ENCODE measurements at regions of chr17 and their contacts with region 1.

Region 1: DNA sequence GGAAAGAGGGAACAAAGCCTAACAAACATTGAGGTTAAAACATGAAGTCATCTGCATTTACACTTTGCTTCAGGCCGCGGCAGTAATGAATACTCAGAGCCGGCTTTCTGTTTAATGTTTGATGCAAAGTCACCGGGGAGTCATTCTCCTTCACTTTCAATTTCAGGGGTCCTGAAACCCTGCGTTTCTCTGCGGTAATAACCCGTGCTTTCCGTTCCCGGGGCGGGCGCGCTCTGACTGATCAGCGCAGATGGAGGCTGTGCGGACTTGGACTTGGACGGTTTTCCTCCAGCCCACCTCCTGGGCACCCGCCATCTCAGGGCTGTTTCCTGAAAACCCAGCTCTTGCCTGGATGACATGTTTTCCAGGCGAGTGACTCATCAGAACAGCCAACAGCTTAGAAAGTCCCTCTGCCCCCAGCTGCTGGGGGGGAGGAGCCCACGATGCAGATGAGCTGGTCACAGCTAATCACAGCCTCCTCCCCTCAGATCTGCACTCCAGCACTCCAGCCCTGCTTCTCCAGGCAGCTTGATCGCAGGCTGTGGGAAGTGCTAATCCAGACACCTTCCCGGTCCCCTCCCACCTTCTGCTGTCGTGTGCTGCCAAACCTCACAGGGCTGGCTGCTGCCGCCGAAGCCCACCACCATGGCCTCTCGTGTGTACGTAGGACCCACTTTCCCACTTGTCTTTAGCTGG is 158.6 kb upstream of the CHMP6 start:
- DNase-seq: peak; percentile 88
- ATAC-seq: peak; percentile 89
- H3K4me3 Mint-ChIP-seq: peak overlapping the region; percentile 83
- H3K27ac Mint-ChIP-seq: peak overlapping the region; percentile 96
- H3K4me1 Mint-ChIP-seq: peaks cover 63% of the 10 kb centered on the region
- H3K27me3 Mint-ChIP-seq: no peaks in the 10 kb centered on the region

Region 2: GRCh38 chr17:80706463-80706867 is 126.6 kb before region 1 on chr17:
- CTCF ChIA-PET with region 1: no interaction called
- POLR2A ChIA-PET with region 1: no interaction called
- DNase-seq: no peak
- ATAC-seq: no peak
- H3K4me3 Mint-ChIP-seq: no peak overlapping the region
- H3K27ac Mint-ChIP-seq: no peak overlapping the region
- H3K4me1 Mint-ChIP-seq: peaks cover 92% of the 10 kb centered on the region
- H3K27me3 Mint-ChIP-seq: no peaks in the 10 kb centered on the region

Region 3: DNA sequence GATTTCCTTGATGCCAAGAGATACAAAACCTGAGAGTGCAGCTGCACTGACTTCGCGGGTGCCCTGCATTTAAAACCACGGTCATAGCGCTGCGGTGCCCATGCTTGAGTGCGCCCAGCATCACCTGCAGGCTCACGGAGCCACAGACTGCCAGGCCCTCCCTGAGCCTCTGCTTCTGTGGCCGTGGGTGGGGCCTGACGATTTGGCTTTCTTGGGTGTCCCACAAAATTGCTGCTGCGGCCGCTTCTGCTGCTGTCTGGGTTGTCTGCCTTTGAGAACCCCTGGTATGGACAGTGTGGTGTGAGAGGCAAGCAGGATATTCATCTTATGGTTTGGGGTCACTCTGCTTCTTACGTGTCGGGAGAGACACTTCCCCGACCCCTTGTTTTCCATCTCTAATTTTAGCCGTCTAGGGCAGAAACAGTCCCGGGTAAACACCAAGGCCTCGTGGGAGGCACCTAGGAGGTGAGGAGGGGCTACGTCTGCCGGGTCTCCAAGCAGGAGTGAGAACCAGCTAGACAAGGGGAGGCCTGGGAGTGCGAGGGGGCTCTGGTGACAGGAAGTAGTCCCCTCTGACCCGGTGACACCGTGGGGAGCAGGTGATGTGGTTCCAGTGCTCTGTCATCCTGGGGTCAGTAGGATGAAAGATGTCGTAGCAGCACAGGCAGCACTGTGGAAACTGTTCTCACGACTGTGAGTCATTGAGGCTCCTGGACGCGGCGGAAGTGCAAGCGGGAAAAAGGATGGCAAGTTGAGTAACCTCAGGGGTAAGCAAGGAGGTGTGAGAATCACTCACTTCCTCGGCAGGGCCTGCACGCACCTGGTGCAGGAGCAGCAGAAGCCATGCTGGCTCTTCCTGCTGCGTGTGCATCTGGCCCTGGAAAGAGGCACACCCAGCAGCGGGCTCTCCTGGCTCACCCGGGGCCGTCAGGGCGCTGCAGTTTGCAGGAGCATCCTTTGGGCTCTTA is 112.1 kb before region 1 on chr17:
- CTCF ChIA-PET with region 1: no interaction called
- POLR2A ChIA-PET with region 1: no interaction called
- DNase-seq: peak; percentile 82
- ATAC-seq: peak; percentile 86
- H3K4me3 Mint-ChIP-seq: peak overlapping the region; percentile 67
- H3K27ac Mint-ChIP-seq: peak overlapping the region; percentile 94
- H3K4me1 Mint-ChIP-seq: peaks cover 66% of the 10 kb centered on the region
- H3K27me3 Mint-ChIP-seq: no peaks in the 10 kb centered on the region

Region 4: DNA sequence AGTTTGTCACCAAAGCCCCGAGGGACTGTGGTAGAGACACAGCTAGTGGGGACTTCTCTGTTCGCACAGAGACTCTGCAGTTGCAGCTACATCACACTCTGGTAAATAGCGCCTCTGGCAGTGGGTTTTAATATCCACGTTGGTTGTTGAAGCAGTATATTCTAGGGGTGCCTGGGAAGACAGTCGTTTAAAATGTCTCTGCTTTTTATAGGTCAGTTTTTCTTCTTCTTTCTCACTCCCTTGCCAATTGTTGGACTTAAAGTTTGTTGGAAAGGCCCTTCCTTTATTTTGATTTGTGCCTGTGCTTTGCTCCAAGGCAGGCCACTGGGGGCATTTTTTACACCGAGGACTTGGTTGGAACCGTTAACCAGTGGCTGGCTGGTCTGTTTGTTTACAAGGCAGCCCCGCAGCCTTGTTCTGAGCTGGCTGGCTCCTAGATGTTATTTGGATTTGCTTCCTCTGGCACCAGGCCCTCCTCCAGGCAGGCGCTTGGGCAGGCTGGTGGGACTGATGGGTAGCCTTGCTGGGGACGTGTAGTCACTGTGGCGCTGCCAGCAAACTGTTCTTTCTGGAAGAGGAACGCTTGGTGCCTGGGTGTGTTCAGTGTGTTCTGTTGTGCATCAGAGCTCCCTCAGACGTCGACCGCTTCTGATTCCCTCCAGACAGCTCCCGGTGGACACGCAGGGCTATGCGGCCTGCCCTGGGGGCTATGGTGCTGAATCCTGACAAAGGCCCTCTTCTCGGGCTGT is 59.6 kb before region 1 on chr17:
- CTCF ChIA-PET with region 1: no interaction called
- POLR2A ChIA-PET with region 1: interaction called, 10 read pairs
- DNase-seq: no peak
- ATAC-seq: peak; percentile 53
- H3K4me3 Mint-ChIP-seq: no peak overlapping the region
- H3K27ac Mint-ChIP-seq: peak overlapping the region; percentile 94
- H3K4me1 Mint-ChIP-seq: peaks cover 75% of the 10 kb centered on the region
- H3K27me3 Mint-ChIP-seq: no peaks in the 10 kb centered on the region

Region 5: GRCh38 chr17:80780381-80781198 is 52.4 kb before region 1 on chr17:
- CTCF ChIA-PET with region 1: interaction called, 12 read pairs
- POLR2A ChIA-PET with region 1: interaction called, 10 read pairs
- DNase-seq: peak; percentile 76
- ATAC-seq: peak; percentile 73
- H3K4me3 Mint-ChIP-seq: peak overlapping the region; percentile 52
- H3K27ac Mint-ChIP-seq: peak overlapping the region; percentile 90
- H3K4me1 Mint-ChIP-seq: peaks cover 85% of the 10 kb centered on the region
- H3K27me3 Mint-ChIP-seq: no peaks in the 10 kb centered on the region

Region 6: DNA sequence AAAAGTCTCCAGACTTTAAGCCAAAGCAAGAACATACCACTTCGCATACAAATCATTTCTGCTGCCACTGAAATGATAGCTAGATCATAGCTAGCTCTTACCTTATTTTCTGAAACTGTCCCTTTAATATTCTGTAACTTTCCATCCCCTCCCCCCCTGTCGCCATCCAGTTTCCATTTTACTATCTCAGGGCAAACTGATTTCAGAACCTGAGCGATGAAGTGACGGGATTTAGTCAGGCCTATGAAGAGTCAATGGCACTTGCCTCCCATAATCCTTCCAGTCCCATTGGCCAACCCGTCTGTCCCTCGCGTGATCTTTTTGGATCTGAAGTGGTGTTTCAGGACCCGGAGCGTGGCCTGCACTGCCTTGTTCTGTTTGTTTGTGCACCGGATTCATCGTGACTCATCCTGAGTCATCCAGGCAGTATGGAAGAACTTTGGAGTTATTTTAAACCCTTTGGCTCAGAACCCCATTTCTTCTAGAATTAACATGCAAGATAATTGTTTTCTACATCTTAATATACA is 41.2 kb before region 1 on chr17:
- CTCF ChIA-PET with region 1: interaction called, 12 read pairs
- POLR2A ChIA-PET with region 1: interaction called, 10 read pairs
- DNase-seq: peak; percentile 65
- ATAC-seq: peak; percentile 11
- H3K4me3 Mint-ChIP-seq: peak overlapping the region; percentile 71
- H3K27ac Mint-ChIP-seq: peak overlapping the region; percentile 97
- H3K4me1 Mint-ChIP-seq: peaks cover 75% of the 10 kb centered on the region
- H3K27me3 Mint-ChIP-seq: no peaks in the 10 kb centered on the region

Region 7: DNA sequence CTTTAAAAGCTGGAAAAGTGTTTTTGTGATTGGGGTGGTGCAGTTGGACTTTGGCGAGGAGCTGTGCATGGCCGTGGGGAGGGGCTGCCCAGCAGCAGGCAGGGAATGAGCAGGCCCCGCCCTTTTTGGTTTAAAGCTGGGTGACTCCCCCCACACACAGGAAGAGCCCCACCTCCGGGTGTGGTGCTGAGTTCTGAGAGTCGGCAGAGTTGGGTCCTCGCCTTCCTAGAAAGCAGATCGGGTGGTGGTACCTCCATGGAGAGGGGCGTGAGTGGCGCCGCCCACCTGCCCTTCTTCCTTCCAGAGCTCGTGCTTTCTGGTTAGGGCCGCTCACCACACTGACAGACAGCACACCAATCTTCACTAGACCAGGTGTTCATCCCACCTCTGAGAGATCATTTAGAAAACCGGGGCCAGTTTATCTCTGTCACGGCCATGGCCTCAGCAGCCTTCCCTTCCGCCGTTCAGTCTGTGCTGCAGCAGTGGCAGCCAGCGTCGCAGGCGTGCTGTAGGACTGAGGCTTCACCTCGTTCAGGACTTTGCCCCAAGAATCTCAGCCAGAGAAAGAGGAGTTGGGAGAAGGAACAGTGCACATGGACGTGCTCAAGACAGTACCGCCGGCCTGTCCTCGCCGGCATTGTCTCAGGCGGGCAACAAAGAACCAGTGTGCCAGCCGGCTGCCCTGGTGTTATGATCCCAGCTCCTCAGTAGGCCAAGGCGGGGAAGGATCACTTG is 14.6 kb after region 1 on chr17:
- CTCF ChIA-PET with region 1: interaction called, 10 read pairs
- POLR2A ChIA-PET with region 1: interaction called, 9 read pairs
- DNase-seq: peak; percentile 90
- ATAC-seq: peak; percentile 91
- H3K4me3 Mint-ChIP-seq: peak overlapping the region; percentile 8
- H3K27ac Mint-ChIP-seq: peak overlapping the region; percentile 97
- H3K4me1 Mint-ChIP-seq: peaks cover 85% of the 10 kb centered on the region
- H3K27me3 Mint-ChIP-seq: no peaks in the 10 kb centered on the region

Region 8: GRCh38 chr17:80855948-80856862 is 23.2 kb after region 1 on chr17:
- CTCF ChIA-PET with region 1: interaction called, 15 read pairs
- POLR2A ChIA-PET with region 1: interaction called, 20 read pairs
- DNase-seq: peak; percentile 93
- ATAC-seq: peak; percentile 95
- H3K4me3 Mint-ChIP-seq: peak overlapping the region; percentile 54
- H3K27ac Mint-ChIP-seq: peak overlapping the region; percentile 94
- H3K4me1 Mint-ChIP-seq: peaks cover 97% of the 10 kb centered on the region
- H3K27me3 Mint-ChIP-seq: no peaks in the 10 kb centered on the region

Region 9: DNA sequence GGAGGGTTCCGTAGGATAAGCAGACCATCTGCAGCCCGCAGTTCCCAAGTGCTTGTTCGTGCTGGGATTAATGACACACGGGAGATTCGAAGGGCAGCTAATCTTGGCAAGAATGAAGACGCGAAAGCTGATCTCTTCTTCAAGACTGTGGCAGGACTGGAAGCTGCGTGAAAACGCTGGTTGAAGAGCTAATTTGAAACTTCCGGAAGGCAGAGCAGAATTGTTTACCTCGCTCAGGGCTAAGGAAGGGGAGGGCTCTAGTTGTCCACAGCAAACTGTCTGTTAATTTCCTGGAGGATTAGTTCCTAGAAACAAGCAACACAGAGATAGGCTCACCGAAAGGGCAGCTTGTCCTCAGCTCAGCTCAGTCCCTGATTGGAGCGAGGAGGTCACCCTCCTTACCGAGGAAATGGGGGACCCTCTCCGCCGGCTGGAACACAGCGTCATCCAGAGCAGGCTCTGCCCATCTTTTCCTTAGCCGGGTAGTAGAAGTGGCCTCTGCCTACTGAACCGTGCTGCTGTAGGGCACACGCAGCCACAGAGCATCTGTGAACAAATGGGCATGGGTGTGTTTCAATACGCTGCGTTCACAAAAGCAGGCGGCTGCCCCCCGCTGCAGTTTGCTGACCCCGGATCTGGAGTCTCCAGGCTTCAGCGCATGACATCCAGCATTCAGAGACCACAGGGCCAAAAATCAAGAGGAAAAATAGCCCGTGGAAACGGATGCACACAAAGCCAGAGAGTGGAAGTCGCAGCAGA is 185.2 kb after region 1 on chr17:
- CTCF ChIA-PET with region 1: no interaction called
- POLR2A ChIA-PET with region 1: no interaction called
- DNase-seq: peak; percentile 75
- ATAC-seq: peak; percentile 89
- H3K4me3 Mint-ChIP-seq: peak overlapping the region; percentile 74
- H3K27ac Mint-ChIP-seq: peak overlapping the region; percentile 94
- H3K4me1 Mint-ChIP-seq: peaks cover 52% of the 10 kb centered on the region
- H3K27me3 Mint-ChIP-seq: no peaks in the 10 kb centered on the region